Activated CD4-positive, alpha-beta T cell treated with anti-CD3 and anti-CD28 coated beads for 36 hours (primary cell): ENCODE measurements at regions of chr4 and their contacts with region 1.

Region 1: DNA sequence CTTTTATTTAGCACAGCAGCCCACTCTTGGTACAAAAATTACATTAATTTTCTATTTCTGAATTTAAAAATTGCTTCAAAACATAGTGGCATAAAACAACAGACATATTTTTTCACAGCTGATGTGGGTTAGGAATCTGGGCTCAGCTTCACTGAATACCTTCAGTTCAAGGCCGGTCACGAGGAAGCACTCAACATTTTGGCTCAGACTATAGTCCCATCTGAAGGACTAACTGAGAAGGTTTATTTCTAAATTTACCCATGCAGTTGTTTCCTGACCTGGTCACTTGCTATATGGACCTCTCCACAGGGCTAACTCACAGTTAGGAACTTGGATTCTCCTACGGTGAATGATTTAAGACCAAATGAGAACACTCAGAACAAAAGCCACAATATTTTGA is 1230.2 kb upstream of the ADGRL3 start:
- DNase-seq: no peak
- ATAC-seq: no peak
- H3K4me3 Mint-ChIP-seq: no peak overlapping the region
- H3K27ac Mint-ChIP-seq: no peak overlapping the region
- H3K4me1 Mint-ChIP-seq: no peaks in the 10 kb centered on the region
- H3K27me3 Mint-ChIP-seq: no peaks in the 10 kb centered on the region

Region 2: GRCh38 chr4:59002148-59002547 is 967.8 kb before region 1 on chr4:
- CTCF ChIA-PET with region 1: no interaction called
- POLR2A ChIA-PET with region 1: no interaction called
- intact Hi-C with region 1: no loop called
- DNase-seq: no peak
- ATAC-seq: no peak
- H3K4me3 Mint-ChIP-seq: no peak overlapping the region
- H3K27ac Mint-ChIP-seq: no peak overlapping the region
- H3K4me1 Mint-ChIP-seq: no peaks in the 10 kb centered on the region
- H3K27me3 Mint-ChIP-seq: no peaks in the 10 kb centered on the region

Region 3: GRCh38 chr4:59987289-59987688 is 17.4 kb after region 1 on chr4:
- CTCF ChIA-PET with region 1: no interaction called
- POLR2A ChIA-PET with region 1: no interaction called
- intact Hi-C with region 1: loop called in 1 of 2 experiments (anchors 1 kb)
- DNase-seq: no peak
- ATAC-seq: no peak
- H3K4me3 Mint-ChIP-seq: no peak overlapping the region
- H3K27ac Mint-ChIP-seq: no peak overlapping the region
- H3K4me1 Mint-ChIP-seq: no peaks in the 10 kb centered on the region
- H3K27me3 Mint-ChIP-seq: no peaks in the 10 kb centered on the region